ENCODE measurements at regions of chr16 and their contacts with region 1.

Region 1: GRCh38 chr16:4511441-4512082 is 27.0 kb downstream of the CDIP1 start:
- DNase-seq: no peak
- ATAC-seq: peak; percentile 88
- H3K4me3 ChIP-seq: no peak overlapping the region
- H3K27ac ChIP-seq: no peak overlapping the region
- H3K4me1 ChIP-seq: peaks cover 0 to 1% of the 10 kb centered on the region in 2 experiments; a peak in 1 of 4 replicates
- H3K27me3 ChIP-seq: no peaks in the 10 kb centered on the region
- CTCF ChIP-seq: peak; percentile 43 to 65 (median 59); a peak in 5 of 6 replicates
- POLR2A ChIP-seq: no peak
- RAD21 ChIP-seq: peak; percentile 54

Region 2: DNA sequence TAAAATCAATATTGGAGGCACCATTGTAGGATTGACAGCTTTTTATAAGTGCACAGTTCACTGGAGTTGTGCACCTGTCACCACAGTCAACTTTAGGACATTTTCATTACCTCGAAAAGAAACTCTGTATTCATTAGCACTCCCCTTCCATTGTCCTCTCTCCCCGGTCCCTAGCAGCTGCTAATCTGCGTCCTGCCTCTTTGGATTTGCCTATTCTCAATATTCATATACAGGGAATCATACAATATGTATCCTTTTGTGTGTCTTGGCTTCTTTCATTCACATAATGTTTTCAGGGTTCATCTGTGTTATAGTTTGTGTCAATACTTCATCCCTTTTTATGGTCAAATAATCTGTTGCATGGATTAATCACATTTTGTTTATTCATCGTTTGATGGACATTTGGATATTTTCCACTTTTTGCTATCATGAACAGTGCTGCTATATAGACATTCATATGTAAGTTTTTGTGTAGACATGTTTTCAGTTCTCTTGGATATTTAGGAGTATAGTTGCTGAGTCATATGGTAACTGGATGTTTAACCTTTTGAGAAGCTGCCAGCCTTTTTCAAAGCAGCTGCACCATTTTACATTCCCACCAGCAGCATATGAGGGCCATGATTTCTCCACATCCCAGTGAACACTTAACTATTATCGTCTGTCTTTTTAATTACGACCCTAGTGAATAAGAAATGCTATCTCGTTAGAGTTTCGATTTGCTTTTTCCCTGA is 76.1 kb before region 1 on chr16:
- CTCF ChIA-PET with region 1: no interaction called
- POLR2A ChIA-PET with region 1: no interaction called
- RAD21 ChIA-PET with region 1: no interaction called
- intact Hi-C with region 1: no loop called
- DNase-seq: no peak
- ATAC-seq: no peak
- H3K4me3 ChIP-seq: no peak overlapping the region
- H3K27ac ChIP-seq: no peak overlapping the region
- H3K4me1 ChIP-seq: no peaks in the 10 kb centered on the region
- H3K27me3 ChIP-seq: no peaks in the 10 kb centered on the region
- CTCF ChIP-seq: no peak
- POLR2A ChIP-seq: no peak
- RAD21 ChIP-seq: no peak

Region 3: DNA sequence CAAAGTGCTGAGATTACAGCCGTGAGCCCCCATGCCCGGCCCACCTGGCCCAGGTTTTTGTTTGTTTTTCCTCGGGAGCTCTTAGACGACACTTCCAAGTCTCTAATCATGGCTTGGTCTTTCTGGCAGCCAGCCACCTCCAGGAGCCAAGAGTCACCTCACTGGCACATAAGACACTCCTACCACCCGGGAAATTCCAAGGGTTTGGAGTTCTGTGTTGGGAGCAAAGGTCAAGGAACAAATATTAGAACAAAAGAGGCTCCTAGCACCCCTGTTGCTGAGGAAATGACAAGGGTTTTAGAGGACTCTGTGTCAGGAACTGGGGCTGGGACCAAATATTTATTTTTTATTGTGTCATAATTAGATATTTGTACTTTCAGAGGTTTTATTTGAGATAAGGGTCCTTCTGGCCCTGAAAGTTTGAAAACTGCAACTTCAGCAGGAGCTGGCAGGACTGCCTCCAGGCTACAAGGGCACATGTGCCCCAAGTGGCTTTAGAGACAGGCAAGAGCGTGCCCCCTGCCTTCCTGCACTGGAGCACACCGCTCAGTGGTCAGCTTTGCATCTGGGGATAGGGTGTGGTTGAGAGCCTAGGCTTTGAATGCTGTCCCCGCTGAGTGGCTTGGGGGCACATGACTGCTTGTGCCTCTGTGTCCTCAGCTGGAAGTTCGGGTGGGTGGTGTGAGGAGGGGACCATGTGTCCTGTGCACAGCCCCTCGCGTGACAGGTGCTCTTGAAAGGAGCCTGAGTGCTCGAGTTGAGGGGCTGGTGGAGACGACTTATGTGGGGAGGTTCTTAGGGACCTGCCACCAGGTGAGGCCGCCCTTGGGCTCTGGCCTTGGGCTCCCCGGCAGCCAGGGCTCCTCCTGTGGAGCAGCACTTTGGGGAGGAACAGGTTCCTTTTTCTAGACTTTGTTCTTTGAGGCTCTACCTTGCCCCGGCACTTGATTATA is 142.7 kb after region 1 on chr16:
- CTCF ChIA-PET with region 1: no interaction called
- POLR2A ChIA-PET with region 1: no interaction called
- RAD21 ChIA-PET with region 1: no interaction called
- intact Hi-C with region 1: loop called (anchors 10 kb)
- DNase-seq: no peak
- ATAC-seq: no peak
- H3K4me3 ChIP-seq: no peak overlapping the region
- H3K27ac ChIP-seq: no peak overlapping the region
- H3K4me1 ChIP-seq: peaks cover 2 to 8% of the 10 kb centered on the region in 2 experiments; a peak in 3 of 4 replicates
- H3K27me3 ChIP-seq: no peaks in the 10 kb centered on the region
- CTCF ChIP-seq: no peak
- POLR2A ChIP-seq: no peak
- RAD21 ChIP-seq: no peak